ENCODE measurements at regions of chr10 and their contacts with region 1.

Region 1: GRCh38 chr10:4656576-4657182 is 169.3 kb upstream of the AKR1E2 start:
- DNase-seq: peak; percentile 33 to 70
- ATAC-seq: peak in 6 of 8 donors; percentile 50 to 72 (median 64)
- H3K4me3 ChIP-seq: no peak overlapping the region
- H3K27ac ChIP-seq: no peak overlapping the region
- H3K4me1 ChIP-seq: peaks cover 0 to 34% (median 10%) of the 10 kb centered on the region in 9 donors
- H3K27me3 ChIP-seq: no peaks in the 10 kb centered on the region
- CTCF ChIP-seq: peak; percentile 79 to 95 (median 93)

Region 2: GRCh38 chr10:3197348-3198003 is 1459.2 kb before region 1 on chr10:
- intact Hi-C with region 1: loop called in 4 of 10 experiments (anchors 5 to 10 kb)
- DNase-seq: peak; percentile 77 to 83
- ATAC-seq: peak; percentile 88 to 95 (median 94)
- H3K4me3 ChIP-seq: peak overlapping the region in 9 of 10 donors; percentile 0 to 42 (median 30)
- H3K27ac ChIP-seq: peak overlapping the region in 5 of 10 donors; percentile 41 to 62 (median 43)
- H3K4me1 ChIP-seq: peaks cover 3 to 25% (median 9%) of the 10 kb centered on the region in 9 donors
- H3K27me3 ChIP-seq: peaks cover 0 to 21% (median 0%) of the 10 kb centered on the region in 7 donors
- CTCF ChIP-seq: peak in 8 of 9 donors; percentile 86 to 97 (median 93)

Region 3: DNA sequence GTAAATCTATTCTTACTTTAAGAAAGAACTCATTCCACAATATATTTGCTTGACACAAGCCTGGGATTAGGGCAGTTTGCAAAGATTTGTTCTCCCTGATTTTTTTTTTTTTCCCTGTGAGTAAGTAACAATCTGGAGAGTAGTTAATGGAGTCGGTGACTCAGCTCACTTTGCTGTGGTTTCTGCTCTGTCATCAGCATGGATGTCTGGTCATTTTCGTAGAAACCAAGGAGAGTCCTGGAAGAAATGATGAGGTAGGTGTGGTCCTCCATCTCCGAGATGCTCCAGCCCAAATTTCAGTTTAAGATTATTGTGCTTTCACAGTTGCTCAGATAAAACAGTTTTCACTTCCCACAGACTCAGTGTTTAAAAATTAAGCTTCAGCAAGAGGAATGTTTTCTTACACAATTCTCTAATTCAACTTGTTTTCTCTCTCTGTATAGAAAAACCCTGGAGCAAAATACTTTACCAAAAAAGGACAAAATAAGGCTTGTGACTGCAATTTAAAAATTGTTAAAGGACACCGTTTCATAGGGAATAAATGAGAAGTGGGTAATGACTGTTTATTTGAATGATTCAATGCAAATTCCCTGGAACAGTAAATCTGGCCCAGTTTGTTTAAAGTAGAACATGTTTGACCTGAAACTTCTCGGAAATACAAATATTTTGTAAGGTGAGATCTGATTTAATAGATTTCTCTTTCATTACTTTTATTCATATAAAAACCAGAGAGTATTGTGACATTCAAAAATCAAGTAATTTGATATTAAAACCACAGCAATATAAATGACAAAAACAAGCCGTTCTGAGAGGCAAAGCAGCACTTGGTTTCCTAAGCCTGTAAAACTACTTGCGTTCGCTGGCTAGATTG is 1407.6 kb before region 1 on chr10:
- intact Hi-C with region 1: loop called in 1 of 10 experiments (anchors 10 kb)
- DNase-seq: no peak
- ATAC-seq: peak in 6 of 8 donors; percentile 49 to 86 (median 70)
- H3K4me3 ChIP-seq: no peak overlapping the region
- H3K27ac ChIP-seq: peak overlapping the region in 8 of 10 donors; percentile 23 to 76 (median 54)
- H3K4me1 ChIP-seq: peaks cover 0 to 13% (median 0%) of the 10 kb centered on the region in 9 donors
- H3K27me3 ChIP-seq: peaks cover 0 to 3% (median 0%) of the 10 kb centered on the region in 7 donors
- CTCF ChIP-seq: no peak

Region 4: DNA sequence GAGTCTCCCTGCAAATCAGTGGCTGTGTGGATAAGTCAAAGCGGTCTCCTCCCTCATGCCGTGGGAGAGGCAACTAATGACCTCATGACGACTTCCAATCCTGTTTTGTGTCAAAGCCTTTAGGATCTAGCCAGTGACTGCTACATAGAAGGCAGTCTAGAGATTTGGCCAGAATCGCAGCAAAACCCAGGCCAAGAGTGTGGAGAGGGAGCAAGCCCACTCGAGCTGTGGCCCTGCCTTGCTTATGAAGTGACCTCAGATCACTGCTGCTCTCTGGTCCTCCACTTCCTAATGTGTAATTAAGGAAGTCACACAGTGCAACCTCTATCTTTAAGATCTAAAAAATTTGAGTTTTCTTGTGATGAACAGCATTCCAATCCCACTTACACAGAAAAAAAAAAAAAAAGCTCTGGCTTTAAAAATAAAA is 575.0 kb before region 1 on chr10:
- intact Hi-C with region 1: loop called in 1 of 10 experiments (anchors 10 kb)
- DNase-seq: peak in 1 of 2 donors; percentile 43
- ATAC-seq: peak in 7 of 8 donors; percentile 29 to 75 (median 64)
- H3K4me3 ChIP-seq: no peak overlapping the region
- H3K27ac ChIP-seq: peak overlapping the region in 8 of 10 donors; percentile 47 to 87 (median 64)
- H3K4me1 ChIP-seq: peaks cover 4 to 62% (median 51%) of the 10 kb centered on the region in 9 donors
- H3K27me3 ChIP-seq: no peaks in the 10 kb centered on the region
- CTCF ChIP-seq: no peak

Region 5: GRCh38 chr10:4506095-4506494 is 150.6 kb before region 1 on chr10:
- intact Hi-C with region 1: loop called in 7 of 10 experiments (anchors 5 to 10 kb)
- DNase-seq: no peak
- ATAC-seq: no peak
- H3K4me3 ChIP-seq: no peak overlapping the region
- H3K27ac ChIP-seq: no peak overlapping the region
- H3K4me1 ChIP-seq: peaks cover 0 to 6% (median 0%) of the 10 kb centered on the region in 9 donors
- H3K27me3 ChIP-seq: no peaks in the 10 kb centered on the region
- CTCF ChIP-seq: no peak